ENCODE measurements at regions of chr19 and their contacts with region 1.

Region 1: DNA sequence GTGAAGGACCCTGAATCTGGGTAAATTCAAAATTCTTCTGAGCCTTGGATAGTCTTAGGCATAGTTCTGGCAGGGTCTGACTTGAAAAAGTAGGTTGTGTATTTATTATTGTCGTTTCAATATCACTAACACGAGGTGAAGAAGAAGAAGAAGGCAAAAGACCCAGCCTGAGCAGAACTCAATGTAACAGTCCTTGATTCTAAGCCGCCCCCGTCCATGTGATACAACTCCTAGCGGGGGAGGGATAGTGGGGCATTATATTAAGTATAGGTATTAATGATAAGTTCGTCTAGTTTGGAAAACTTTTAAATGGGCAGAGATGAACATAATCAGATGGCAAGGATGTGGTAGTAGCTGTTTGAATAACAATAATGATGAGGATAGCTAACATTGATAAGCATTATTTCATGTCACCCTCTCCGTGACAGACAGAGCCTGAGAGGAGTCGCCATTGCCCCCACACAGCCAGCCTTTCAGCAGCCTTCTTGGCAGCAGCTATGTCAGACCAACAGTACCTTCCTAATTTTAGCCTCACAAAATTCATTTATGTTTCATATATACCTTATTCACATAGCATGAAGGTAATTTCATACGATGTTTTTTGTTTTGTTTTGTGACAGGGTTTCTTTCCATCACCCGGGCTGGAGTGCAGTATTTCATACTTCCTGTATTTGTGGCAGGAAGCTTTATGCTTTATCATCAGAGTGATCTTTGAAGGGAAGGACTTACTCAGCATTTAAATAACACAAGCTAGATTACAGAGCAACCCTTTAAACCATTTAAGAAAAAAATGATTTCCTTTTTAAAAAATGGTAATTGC is 64.4 kb upstream of the NPAS1 start:
- DNase-seq: peak; percentile 49
- H3K4me3 Mint-ChIP-seq: peak overlapping the region; percentile 75
- H3K27ac Mint-ChIP-seq: peak overlapping the region; percentile 99
- H3K4me1 Mint-ChIP-seq: peaks cover 79% of the 10 kb centered on the region
- H3K27me3 Mint-ChIP-seq: no peaks in the 10 kb centered on the region

Region 2: DNA sequence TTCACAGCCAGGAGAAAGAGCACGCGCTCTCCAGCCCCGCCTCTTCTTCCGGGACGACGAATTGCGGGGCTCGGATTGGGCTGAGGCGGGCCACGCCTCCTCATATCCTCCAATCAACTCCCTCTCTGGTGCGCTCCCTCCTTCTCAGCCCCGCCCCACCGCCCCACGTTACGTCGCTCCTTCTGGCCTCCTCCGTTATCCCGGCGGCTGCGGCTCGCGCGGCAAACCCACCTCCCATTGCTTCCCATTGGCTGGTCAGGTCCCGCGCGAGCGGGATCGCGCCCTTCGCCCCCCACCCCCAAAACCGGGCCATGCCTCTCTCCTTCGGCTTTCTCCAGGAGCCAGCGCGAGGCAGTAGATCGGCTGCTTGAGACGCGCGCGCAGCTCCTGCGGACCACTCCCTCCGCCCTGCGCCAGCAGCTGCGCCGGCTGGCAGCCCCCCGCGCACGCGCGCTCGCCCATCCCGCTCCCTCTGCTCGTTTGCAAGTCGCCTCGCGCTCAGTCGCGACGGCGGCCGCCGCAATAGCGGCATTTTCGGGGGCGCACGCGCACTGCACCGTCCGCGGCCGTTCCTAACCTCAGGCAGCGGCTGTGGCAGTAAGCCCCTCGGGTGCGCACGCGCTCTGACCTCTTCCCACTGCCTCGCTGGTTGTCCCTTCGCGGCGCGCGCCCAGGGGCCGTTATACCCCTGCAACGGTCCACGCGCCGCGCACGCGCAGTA is 94.9 kb before region 1 on chr19:
- CTCF ChIA-PET with region 1: interaction called, 5 read pairs
- POLR2A ChIA-PET with region 1: interaction called, 27 read pairs
- DNase-seq: peak; percentile 97
- H3K4me3 Mint-ChIP-seq: peak overlapping the region; percentile 77
- H3K27ac Mint-ChIP-seq: peak overlapping the region; percentile 88
- H3K4me1 Mint-ChIP-seq: peaks cover 26% of the 10 kb centered on the region
- H3K27me3 Mint-ChIP-seq: no peaks in the 10 kb centered on the region

Region 3: GRCh38 chr19:46924874-46925547 is 30.2 kb before region 1 on chr19:
- CTCF ChIA-PET with region 1: interaction called, 6 read pairs
- POLR2A ChIA-PET with region 1: interaction called, 23 read pairs
- DNase-seq: peak; percentile 64
- H3K4me3 Mint-ChIP-seq: peak overlapping the region; percentile 22
- H3K27ac Mint-ChIP-seq: peak overlapping the region; percentile 74
- H3K4me1 Mint-ChIP-seq: peaks cover 52% of the 10 kb centered on the region
- H3K27me3 Mint-ChIP-seq: no peaks in the 10 kb centered on the region

Region 4: DNA sequence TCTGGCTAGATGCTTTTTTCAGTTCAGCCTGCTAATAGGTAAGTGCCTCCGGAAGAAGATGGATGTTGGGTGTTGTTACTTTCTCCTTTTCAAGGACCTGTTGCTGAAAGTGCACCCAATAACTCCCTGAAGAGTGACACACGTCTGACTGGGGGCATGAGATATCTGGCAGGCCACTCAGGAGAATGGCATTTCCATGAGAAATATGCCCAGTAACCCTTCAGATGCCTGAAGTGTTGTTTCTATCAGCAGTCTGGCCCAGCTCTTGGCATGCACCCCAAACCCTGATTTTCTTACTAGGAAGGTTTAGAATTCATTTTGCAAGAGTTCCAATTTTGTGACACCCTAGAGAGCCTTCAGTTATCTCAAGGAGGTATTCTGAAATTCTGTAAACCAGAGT is 22.9 kb before region 1 on chr19:
- CTCF ChIA-PET with region 1: interaction called, 6 read pairs
- POLR2A ChIA-PET with region 1: interaction called, 20 read pairs
- DNase-seq: no peak
- H3K4me3 Mint-ChIP-seq: no peak overlapping the region
- H3K27ac Mint-ChIP-seq: no peak overlapping the region
- H3K4me1 Mint-ChIP-seq: peaks cover 65% of the 10 kb centered on the region
- H3K27me3 Mint-ChIP-seq: no peaks in the 10 kb centered on the region

Region 5: GRCh38 chr19:46944918-46945628 is 10.1 kb before region 1 on chr19:
- CTCF ChIA-PET with region 1: interaction called, 4 read pairs
- POLR2A ChIA-PET with region 1: interaction called, 23 read pairs
- DNase-seq: no peak
- H3K4me3 Mint-ChIP-seq: no peak overlapping the region
- H3K27ac Mint-ChIP-seq: no peak overlapping the region
- H3K4me1 Mint-ChIP-seq: peaks cover 28% of the 10 kb centered on the region
- H3K27me3 Mint-ChIP-seq: no peaks in the 10 kb centered on the region

Region 6: GRCh38 chr19:46967578-46968027 is 12.4 kb after region 1 on chr19:
- CTCF ChIA-PET with region 1: interaction called, 13 read pairs
- POLR2A ChIA-PET with region 1: interaction called, 24 read pairs
- DNase-seq: peak; percentile 66
- H3K4me3 Mint-ChIP-seq: peak overlapping the region; percentile 51
- H3K27ac Mint-ChIP-seq: peak overlapping the region; percentile 83
- H3K4me1 Mint-ChIP-seq: peaks cover 65% of the 10 kb centered on the region
- H3K27me3 Mint-ChIP-seq: no peaks in the 10 kb centered on the region

Measured in activated CD4-positive, alpha-beta memory T cell treated with anti-CD3 and anti-CD28 coated beads, Interleukin-2, amount 10 ng/mL, durations not matched to agents 7 days and 5 days (primary cell).